H1 (cell line): ENCODE measurements at regions of chr2 and their contacts with region 1.

Region 1: GRCh38 chr2:217993817-217994463 is 8.9 kb downstream of the TNS1 start:
- DNase-seq: peak; percentile 25 to 93
- H3K4me3 ChIP-seq: no peak overlapping the region
- H3K27ac ChIP-seq: no peak overlapping the region
- H3K4me1 ChIP-seq: peaks cover 0 to 13% (median 6%) of the 10 kb centered on the region in 4 experiments; a peak in 4 of 7 replicates
- H3K27me3 ChIP-seq: no peaks in the 10 kb centered on the region; a peak in 3 of 7 replicates
- CTCF ChIP-seq: peak in 2 of 3 experiments; percentile 84 to 91; a peak in 3 of 4 replicates
- EP300 ChIP-seq: no peak
- POLR2A ChIP-seq: no peak
- RAD21 ChIP-seq: peak; percentile 57 to 74

Region 2: GRCh38 chr2:217683106-217683870 is 310.7 kb before region 1 on chr2:
- CTCF ChIA-PET with region 1: no interaction called
- POLR2A ChIA-PET with region 1: no interaction called
- DNase-seq: no peak
- H3K4me3 ChIP-seq: no peak overlapping the region
- H3K27ac ChIP-seq: no peak overlapping the region
- H3K4me1 ChIP-seq: no peaks in the 10 kb centered on the region; a peak in 1 of 7 replicates
- H3K27me3 ChIP-seq: peaks cover 0 to 6% (median 3%) of the 10 kb centered on the region in 4 experiments; a peak in 3 of 7 replicates
- CTCF ChIP-seq: no peak
- EP300 ChIP-seq: no peak
- POLR2A ChIP-seq: no peak
- RAD21 ChIP-seq: no peak

Region 3: GRCh38 chr2:217822296-217823252 is 171.4 kb before region 1 on chr2:
- CTCF ChIA-PET with region 1: interaction called, 12 read pairs
- POLR2A ChIA-PET with region 1: no interaction called
- DNase-seq: no peak
- H3K4me3 ChIP-seq: no peak overlapping the region
- H3K27ac ChIP-seq: no peak overlapping the region
- H3K4me1 ChIP-seq: peaks cover 0 to 3% (median under 1%) of the 10 kb centered on the region in 4 experiments; a peak in 1 of 7 replicates
- H3K27me3 ChIP-seq: no peaks in the 10 kb centered on the region
- CTCF ChIP-seq: peak; percentile 36 to 45 (median 40)
- EP300 ChIP-seq: no peak
- POLR2A ChIP-seq: no peak
- RAD21 ChIP-seq: no peak; a peak in 1 of 4 replicates

Region 4: GRCh38 chr2:217899231-217900009 is 94.5 kb before region 1 on chr2:
- CTCF ChIA-PET with region 1: interaction called, 24 read pairs
- POLR2A ChIA-PET with region 1: no interaction called
- DNase-seq: peak; percentile 71 to 93
- H3K4me3 ChIP-seq: no peak overlapping the region
- H3K27ac ChIP-seq: no peak overlapping the region
- H3K4me1 ChIP-seq: peaks cover 0 to 4% (median 2%) of the 10 kb centered on the region in 4 experiments; a peak in 4 of 7 replicates
- H3K27me3 ChIP-seq: no peaks in the 10 kb centered on the region; a peak in 1 of 7 replicates
- CTCF ChIP-seq: peak; percentile 79 to 98 (median 90)
- EP300 ChIP-seq: no peak
- POLR2A ChIP-seq: no peak
- RAD21 ChIP-seq: peak; percentile 51 to 62

Region 5: GRCh38 chr2:217934321-217935131 is 59.4 kb before region 1 on chr2:
- CTCF ChIA-PET with region 1: interaction called, 480 read pairs
- POLR2A ChIA-PET with region 1: interaction called, 3 read pairs
- DNase-seq: no peak
- H3K4me3 ChIP-seq: no peak overlapping the region
- H3K27ac ChIP-seq: 0 out of 2 replicates have a peak overlapping the region, but pooled peaks have one; percentile 33
- H3K4me1 ChIP-seq: peaks cover 11 to 37% (median 23%) of the 10 kb centered on the region in 4 experiments
- H3K27me3 ChIP-seq: no peaks in the 10 kb centered on the region; a peak in 1 of 7 replicates
- CTCF ChIP-seq: no peak
- EP300 ChIP-seq: no peak
- POLR2A ChIP-seq: no peak
- RAD21 ChIP-seq: no peak

Region 6: GRCh38 chr2:218003981-218004419 is 10.1 kb after region 1 on chr2:
- CTCF ChIA-PET with region 1: interaction called, 30 read pairs
- POLR2A ChIA-PET with region 1: interaction called, 9 read pairs
- DNase-seq: no peak
- H3K4me3 ChIP-seq: no peak overlapping the region
- H3K27ac ChIP-seq: no peak overlapping the region
- H3K4me1 ChIP-seq: peaks cover 0 to 24% (median 15%) of the 10 kb centered on the region in 4 experiments; a peak in 6 of 7 replicates
- H3K27me3 ChIP-seq: peaks cover 0 to 11% (median 9%) of the 10 kb centered on the region in 4 experiments; a peak in 6 of 7 replicates
- CTCF ChIP-seq: no peak
- EP300 ChIP-seq: no peak
- POLR2A ChIP-seq: no peak
- RAD21 ChIP-seq: no peak

Region 7: GRCh38 chr2:218033590-218034496 is 39.9 kb after region 1 on chr2:
- CTCF ChIA-PET with region 1: interaction called, 29 read pairs
- POLR2A ChIA-PET with region 1: interaction called, 3 read pairs
- DNase-seq: peak in 1 of 2 experiments; percentile 75
- H3K4me3 ChIP-seq: peak overlapping the region; percentile 25 to 63 (median 44); a peak in 7 of 8 replicates
- H3K27ac ChIP-seq: no peak overlapping the region
- H3K4me1 ChIP-seq: peaks cover 0 to 13% (median 5%) of the 10 kb centered on the region in 4 experiments; a peak in 5 of 7 replicates
- H3K27me3 ChIP-seq: peaks cover 6 to 25% (median 20%) of the 10 kb centered on the region in 4 experiments
- CTCF ChIP-seq: no peak
- EP300 ChIP-seq: no peak
- POLR2A ChIP-seq: no peak
- RAD21 ChIP-seq: no peak

Region 8: DNA sequence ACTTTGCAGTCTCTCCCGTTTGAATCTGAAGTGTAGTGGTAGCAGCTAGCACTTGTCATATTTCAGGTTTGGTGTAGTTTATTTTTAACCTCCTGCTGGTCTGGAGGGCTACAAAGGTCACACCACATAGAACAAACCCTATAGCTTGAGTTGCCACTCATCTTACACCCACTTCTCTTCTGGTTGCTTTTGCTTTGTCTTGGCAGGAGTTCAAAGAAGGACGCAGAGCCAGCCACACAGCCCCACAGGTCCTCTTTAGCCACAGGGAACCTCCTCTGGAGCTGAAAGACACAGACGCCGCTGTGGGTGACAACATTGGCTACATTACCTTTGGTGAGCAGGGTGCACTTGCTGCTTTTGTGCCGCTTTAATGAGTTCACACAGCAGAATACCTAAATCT is 251.3 kb after region 1 on chr2:
- CTCF ChIA-PET with region 1: no interaction called
- POLR2A ChIA-PET with region 1: no interaction called
- DNase-seq: no peak
- H3K4me3 ChIP-seq: no peak overlapping the region
- H3K27ac ChIP-seq: no peak overlapping the region
- H3K4me1 ChIP-seq: no peaks in the 10 kb centered on the region
- H3K27me3 ChIP-seq: no peaks in the 10 kb centered on the region
- CTCF ChIP-seq: no peak
- EP300 ChIP-seq: no peak
- POLR2A ChIP-seq: no peak
- RAD21 ChIP-seq: no peak